Activated CD4-positive, alpha-beta memory T cell treated with anti-CD3 and anti-CD28 coated beads, Interleukin-2, amount 10 ng/mL, durations not matched to agents 7 days and 5 days (primary cell): ENCODE measurements at regions of chr10 and their contacts with region 1.

Region 1: GRCh38 chr10:124741281-124741921 is 2.8 kb downstream of the FAM53B start:
- DNase-seq: peak; percentile 82
- H3K4me3 Mint-ChIP-seq: peak overlapping the region; percentile 95
- H3K27ac Mint-ChIP-seq: peak overlapping the region; percentile 77
- H3K4me1 Mint-ChIP-seq: peaks cover 71% of the 10 kb centered on the region
- H3K27me3 Mint-ChIP-seq: peaks cover 2% of the 10 kb centered on the region

Region 2: DNA sequence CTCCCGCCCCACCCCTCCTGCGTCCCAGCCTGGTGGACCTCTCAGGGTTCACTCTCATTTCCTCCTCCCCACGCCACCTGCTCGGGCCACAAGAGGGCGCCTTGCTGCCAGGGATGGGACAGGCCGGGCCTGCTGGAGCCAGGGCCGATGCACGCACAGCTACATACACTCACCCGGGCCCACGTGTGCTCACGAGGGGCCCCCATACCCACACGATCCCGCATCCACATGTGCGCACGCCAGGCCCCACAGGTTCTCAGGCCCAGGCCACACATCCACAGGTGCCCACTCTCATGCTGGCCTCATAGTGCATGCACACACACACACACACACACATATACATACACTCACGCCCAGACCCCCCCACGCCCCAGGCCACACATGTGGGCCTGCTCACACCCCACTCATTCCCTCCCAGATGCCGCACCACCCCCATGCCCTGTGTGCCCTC is 211.2 kb before region 1 on chr10:
- CTCF ChIA-PET with region 1: interaction called, 82 read pairs
- POLR2A ChIA-PET with region 1: interaction called, 6 read pairs
- DNase-seq: peak; percentile 88
- H3K4me3 Mint-ChIP-seq: no peak overlapping the region
- H3K27ac Mint-ChIP-seq: no peak overlapping the region
- H3K4me1 Mint-ChIP-seq: peaks cover 4% of the 10 kb centered on the region
- H3K27me3 Mint-ChIP-seq: peaks cover 3% of the 10 kb centered on the region

Region 3: DNA sequence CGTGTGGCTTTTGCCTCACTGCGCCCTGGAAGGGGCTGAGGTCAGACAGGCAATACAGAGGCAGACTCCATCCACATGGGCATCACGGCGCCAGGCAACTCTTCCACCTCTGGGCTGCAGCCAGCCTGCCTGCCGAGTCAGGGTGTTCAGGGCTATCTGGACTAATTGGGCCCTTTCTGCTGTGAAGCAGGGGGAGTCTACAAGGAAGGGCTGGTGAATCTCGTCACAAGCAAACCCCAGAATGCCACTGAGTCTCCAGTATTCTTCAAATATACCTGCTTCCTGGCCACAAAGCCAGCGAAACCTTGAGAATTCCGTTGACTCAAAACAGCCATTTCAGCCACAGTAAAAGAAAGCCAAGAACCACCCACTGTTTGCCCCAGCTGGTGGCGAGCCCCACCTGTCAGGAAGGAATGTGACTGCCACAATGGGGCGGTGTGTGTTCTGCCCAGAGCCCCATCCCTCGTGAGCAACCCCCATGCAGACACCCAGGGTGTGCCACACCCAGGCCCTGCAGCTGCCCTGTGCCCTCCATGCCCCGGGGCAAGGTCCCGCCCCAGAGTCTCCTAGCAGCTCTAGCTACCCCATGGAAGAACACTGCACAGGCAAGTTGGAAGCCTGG is 114.5 kb before region 1 on chr10:
- CTCF ChIA-PET with region 1: interaction called, 59 read pairs
- POLR2A ChIA-PET with region 1: interaction called, 10 read pairs
- DNase-seq: peak; percentile 69
- H3K4me3 Mint-ChIP-seq: peak overlapping the region; percentile 36
- H3K27ac Mint-ChIP-seq: peak overlapping the region; percentile 78
- H3K4me1 Mint-ChIP-seq: peaks cover 46% of the 10 kb centered on the region
- H3K27me3 Mint-ChIP-seq: no peaks in the 10 kb centered on the region

Region 4: GRCh38 chr10:124657806-124658205 is 83.6 kb before region 1 on chr10:
- CTCF ChIA-PET with region 1: interaction called, 15 read pairs
- POLR2A ChIA-PET with region 1: interaction called, 3 read pairs
- DNase-seq: peak; percentile 62
- H3K4me3 Mint-ChIP-seq: peak overlapping the region; percentile 39
- H3K27ac Mint-ChIP-seq: peak overlapping the region; percentile 79
- H3K4me1 Mint-ChIP-seq: peaks cover 75% of the 10 kb centered on the region
- H3K27me3 Mint-ChIP-seq: no peaks in the 10 kb centered on the region

Region 5: GRCh38 chr10:124703778-124704427 is 37.5 kb before region 1 on chr10:
- CTCF ChIA-PET with region 1: interaction called, 22 read pairs
- POLR2A ChIA-PET with region 1: interaction called, 31 read pairs
- DNase-seq: no peak
- H3K4me3 Mint-ChIP-seq: no peak overlapping the region
- H3K27ac Mint-ChIP-seq: peak overlapping the region; percentile 96
- H3K4me1 Mint-ChIP-seq: peaks cover 99% of the 10 kb centered on the region
- H3K27me3 Mint-ChIP-seq: no peaks in the 10 kb centered on the region

Region 6: GRCh38 chr10:124724279-124725027 is 16.9 kb before region 1 on chr10:
- CTCF ChIA-PET with region 1: interaction called, 164 read pairs
- POLR2A ChIA-PET with region 1: interaction called, 238 read pairs
- DNase-seq: no peak
- H3K4me3 Mint-ChIP-seq: no peak overlapping the region
- H3K27ac Mint-ChIP-seq: peak overlapping the region; percentile 98
- H3K4me1 Mint-ChIP-seq: peaks cover 91% of the 10 kb centered on the region
- H3K27me3 Mint-ChIP-seq: no peaks in the 10 kb centered on the region